ENCODE measurements at regions of chr3 and their contacts with region 1.

Region 1: DNA sequence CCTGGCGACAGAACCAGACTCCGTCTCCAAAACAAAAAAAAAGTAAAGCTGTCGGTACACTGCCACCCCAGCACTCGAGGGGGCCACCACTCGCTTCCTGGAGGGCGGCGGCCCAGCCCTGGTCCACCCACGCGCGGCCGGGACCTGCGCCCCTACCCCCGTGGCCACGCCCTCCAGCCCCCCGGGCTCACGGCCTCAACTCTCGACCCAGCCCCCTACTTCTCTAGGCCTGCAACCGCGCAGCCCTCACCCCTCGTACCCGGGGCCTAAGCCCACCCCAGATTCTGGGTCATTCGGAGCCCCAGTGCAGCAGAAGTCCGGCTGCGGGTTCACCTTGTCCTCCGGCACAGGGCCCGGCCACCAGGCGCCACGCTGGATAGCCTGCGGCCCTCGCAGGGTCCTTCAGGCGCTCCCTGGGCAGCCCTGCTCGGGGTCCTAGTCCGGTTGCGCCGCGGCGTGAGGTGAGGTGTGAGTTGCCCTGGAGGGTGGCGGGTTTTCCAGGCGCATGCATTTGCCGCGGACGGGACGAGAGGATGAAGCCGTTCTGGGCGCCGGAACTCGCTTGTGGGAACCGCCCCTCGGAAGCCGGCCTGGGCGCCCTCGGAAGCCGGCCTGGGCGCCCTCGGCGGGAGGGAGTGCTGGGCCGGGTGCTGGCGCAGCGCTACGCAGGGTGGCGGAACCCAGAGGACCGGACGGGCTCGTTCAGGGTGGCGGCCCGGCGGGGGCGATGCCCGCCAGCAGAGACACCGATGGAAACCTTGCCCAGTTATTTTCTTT is 32.3 kb downstream of the SPINK8 start:
- DNase-seq: peak; percentile 83 to 89 (median 85)
- H3K4me3 ChIP-seq: peak within 1 kb of the TSS; percentile 86 to 89
- H3K4me3 Mint-ChIP-seq: peak within 1 kb of the TSS; percentile 91 to 96 (median 94)
- H3K27ac ChIP-seq: peak within 1 kb of the TSS; percentile 90
- H3K27ac Mint-ChIP-seq: peak within 1 kb of the TSS; percentile 78 to 99 (median 97)
- H3K4me1 ChIP-seq: peaks cover 20% of the 10 kb centered on the region
- H3K4me1 Mint-ChIP-seq: peaks cover 25 to 57% (median 32%) of the 10 kb centered on the region in 4 donors
- H3K27me3 ChIP-seq: no peaks in the 10 kb centered on the region
- H3K27me3 Mint-ChIP-seq: no peaks in the 10 kb centered on the region

Region 2: GRCh38 chr3:47932421-47932820 is 368.8 kb before region 1 on chr3:
- CTCF ChIA-PET with region 1: no interaction called
- POLR2A ChIA-PET with region 1: no interaction called
- intact Hi-C with region 1: no loop called
- DNase-seq: no peak
- H3K4me3 ChIP-seq: no peak overlapping the region
- H3K4me3 Mint-ChIP-seq: no peak overlapping the region
- H3K27ac ChIP-seq: no peak overlapping the region
- H3K27ac Mint-ChIP-seq: peak overlapping the region in 1 of 7 donors; percentile 55
- H3K4me1 ChIP-seq: no peaks in the 10 kb centered on the region
- H3K4me1 Mint-ChIP-seq: peaks cover 0 to 12% (median 4%) of the 10 kb centered on the region in 4 donors
- H3K27me3 ChIP-seq: no peaks in the 10 kb centered on the region
- H3K27me3 Mint-ChIP-seq: no peaks in the 10 kb centered on the region

Region 3: DNA sequence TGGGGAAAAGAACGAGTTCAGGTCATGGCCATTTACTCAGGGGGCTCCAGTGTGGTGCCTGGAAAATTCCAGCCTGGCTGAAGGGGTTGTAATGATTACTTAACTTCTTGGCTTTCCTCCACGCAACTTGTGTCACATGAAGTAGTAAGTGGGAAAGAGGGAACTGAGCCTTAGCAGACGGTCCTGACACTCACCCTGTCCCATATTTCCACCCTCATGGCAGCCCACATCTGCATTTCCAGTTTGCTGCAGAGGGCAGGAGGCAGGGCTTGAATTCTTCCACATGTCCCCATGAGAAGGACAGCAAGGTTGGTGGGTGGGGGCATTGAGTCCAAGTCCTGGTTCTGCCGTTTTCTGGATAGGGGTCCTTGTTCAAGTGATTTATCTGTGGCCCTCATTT is 85.7 kb before region 1 on chr3:
- CTCF ChIA-PET with region 1: no interaction called
- POLR2A ChIA-PET with region 1: no interaction called
- intact Hi-C with region 1: no loop called
- DNase-seq: no peak
- H3K4me3 ChIP-seq: no peak overlapping the region
- H3K4me3 Mint-ChIP-seq: no peak overlapping the region
- H3K27ac ChIP-seq: no peak overlapping the region
- H3K27ac Mint-ChIP-seq: no peak overlapping the region
- H3K4me1 ChIP-seq: no peaks in the 10 kb centered on the region
- H3K4me1 Mint-ChIP-seq: no peaks in the 10 kb centered on the region
- H3K27me3 ChIP-seq: no peaks in the 10 kb centered on the region
- H3K27me3 Mint-ChIP-seq: no peaks in the 10 kb centered on the region

Region 4: DNA sequence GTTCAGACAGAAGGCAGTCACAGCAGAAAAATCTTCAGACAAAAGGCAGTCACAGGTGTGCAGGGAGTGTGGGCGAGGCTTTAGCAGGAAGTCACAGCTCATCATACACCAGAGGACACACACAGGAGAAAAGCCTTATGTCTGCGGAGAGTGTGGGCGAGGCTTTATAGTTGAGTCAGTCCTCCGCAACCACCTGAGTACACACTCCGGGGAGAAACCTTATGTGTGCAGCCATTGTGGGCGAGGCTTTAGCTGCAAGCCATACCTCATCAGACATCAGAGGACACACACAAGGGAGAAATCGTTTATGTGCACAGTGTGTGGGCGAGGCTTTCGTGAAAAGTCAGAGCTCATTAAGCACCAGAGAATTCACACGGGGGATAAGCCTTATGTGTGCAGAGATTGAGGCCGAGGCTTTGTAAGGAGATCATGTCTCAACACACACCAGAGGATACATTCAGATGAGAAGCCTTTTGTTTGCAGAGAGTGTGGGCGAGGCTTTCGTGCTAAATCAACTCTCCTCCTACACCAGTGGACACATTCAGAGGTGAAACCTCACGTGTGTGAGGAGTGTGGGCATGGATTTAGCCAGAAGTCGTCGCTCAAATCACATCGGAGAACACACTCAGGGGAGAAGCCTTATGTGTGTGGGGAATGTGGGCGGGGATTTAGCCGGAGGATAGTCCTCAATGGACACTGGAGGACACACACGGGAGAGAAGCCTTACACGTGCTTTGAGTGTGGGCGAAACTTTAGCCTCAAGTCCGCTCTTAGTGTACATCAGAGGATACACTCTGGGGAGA is 32.6 kb before region 1 on chr3:
- CTCF ChIA-PET with region 1: interaction called, 6 read pairs
- POLR2A ChIA-PET with region 1: interaction called, 10 read pairs
- intact Hi-C with region 1: loop called (anchors 2 kb)
- DNase-seq: peak; percentile 70 to 95 (median 82)
- H3K4me3 ChIP-seq: peak overlapping the region; percentile 30 to 31
- H3K4me3 Mint-ChIP-seq: peak overlapping the region; percentile 74 to 89 (median 84)
- H3K27ac ChIP-seq: peak overlapping the region; percentile 53
- H3K27ac Mint-ChIP-seq: peak overlapping the region; percentile 81 to 96 (median 92)
- H3K4me1 ChIP-seq: peaks cover 25% of the 10 kb centered on the region
- H3K4me1 Mint-ChIP-seq: peaks cover 24 to 42% (median 34%) of the 10 kb centered on the region in 4 donors
- H3K27me3 ChIP-seq: no peaks in the 10 kb centered on the region
- H3K27me3 Mint-ChIP-seq: no peaks in the 10 kb centered on the region